Prostate gland (tissue), 2 donors: ENCODE measurements at regions of chr10 and their contacts with region 1.

Region 1: DNA sequence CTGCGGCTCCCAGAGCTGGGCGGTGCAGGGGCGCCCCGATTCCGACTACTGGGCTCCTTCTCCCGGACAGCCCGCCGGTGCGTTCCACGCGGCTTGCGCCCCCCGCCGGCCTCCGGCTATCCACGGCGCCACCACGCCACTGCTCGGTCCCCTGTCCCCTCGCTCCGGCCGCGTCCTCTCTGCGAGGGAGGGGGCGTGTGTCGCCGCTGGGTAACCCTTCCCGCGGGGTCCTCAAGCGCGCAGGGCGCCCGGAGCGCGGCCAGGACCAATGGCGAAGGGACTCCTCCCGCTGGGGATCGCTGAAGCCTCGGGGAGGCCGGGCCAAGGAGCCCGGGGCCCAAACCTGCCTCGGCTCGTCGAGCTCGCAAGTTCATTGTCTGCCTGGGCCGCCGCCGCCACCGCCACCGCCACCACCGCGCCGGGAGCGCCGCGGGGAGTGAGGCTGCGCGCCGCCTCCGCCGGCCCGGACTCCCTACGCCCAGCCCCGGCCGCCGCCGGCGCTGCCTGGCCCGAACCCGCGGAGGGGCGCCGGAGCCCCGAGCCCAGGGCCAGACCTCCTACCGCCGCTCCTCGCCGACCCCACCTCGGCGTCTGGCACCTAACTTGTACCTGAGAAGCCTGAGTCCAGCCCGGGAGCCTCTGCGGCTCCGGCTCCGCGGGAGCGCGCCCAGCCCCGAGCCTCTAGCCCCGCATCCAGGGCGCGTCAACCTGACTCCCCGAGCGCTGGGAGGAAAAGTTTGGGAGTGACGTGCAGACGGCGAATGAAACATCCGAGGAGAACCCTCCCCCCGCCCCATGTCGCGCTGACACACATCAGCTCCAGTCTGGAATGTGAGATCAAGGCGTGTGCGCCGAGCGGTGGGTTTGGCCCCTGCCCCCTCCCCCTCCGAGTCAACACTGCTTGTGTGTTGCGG is at the start of gene CHST15:
- DNase-seq: peak; percentile 50
- H3K4me3 ChIP-seq: peak within 1 kb of the TSS; percentile 54 to 57
- H3K27ac ChIP-seq: peak within 1 kb of the TSS; percentile 83 to 89
- H3K4me1 ChIP-seq: peaks cover 7% of the 10 kb centered on the region
- H3K27me3 ChIP-seq: peaks cover 3% of the 10 kb centered on the region
- CTCF ChIP-seq: peak in 2 of 4 experiments; percentile 30 to 36
- POLR2A ChIP-seq: peak; percentile 82
- total RNA-seq, gene CHST15: 13.9 to 26.0 TPM

Region 2: GRCh38 chr10:123994417-123995081 is 98.6 kb before region 1 on chr10:
- intact Hi-C with region 1: loop called (anchors 5 kb)
- DNase-seq: peak; percentile 80
- H3K4me3 ChIP-seq: no peak overlapping the region
- H3K27ac ChIP-seq: no peak overlapping the region
- H3K4me1 ChIP-seq: no peaks in the 10 kb centered on the region
- H3K27me3 ChIP-seq: peaks cover 7% of the 10 kb centered on the region
- CTCF ChIP-seq: peak; percentile 97 to 99 (median 98)
- POLR2A ChIP-seq: no peak

Region 3: GRCh38 chr10:124217906-124218804 is 125.0 kb after region 1 on chr10:
- intact Hi-C with region 1: no loop called
- DNase-seq: peak; percentile 13
- H3K4me3 ChIP-seq: no peak overlapping the region
- H3K27ac ChIP-seq: no peak overlapping the region
- H3K4me1 ChIP-seq: no peaks in the 10 kb centered on the region
- H3K27me3 ChIP-seq: no peaks in the 10 kb centered on the region
- CTCF ChIP-seq: peak in 1 of 4 experiments; percentile 22
- POLR2A ChIP-seq: no peak

Region 4: DNA sequence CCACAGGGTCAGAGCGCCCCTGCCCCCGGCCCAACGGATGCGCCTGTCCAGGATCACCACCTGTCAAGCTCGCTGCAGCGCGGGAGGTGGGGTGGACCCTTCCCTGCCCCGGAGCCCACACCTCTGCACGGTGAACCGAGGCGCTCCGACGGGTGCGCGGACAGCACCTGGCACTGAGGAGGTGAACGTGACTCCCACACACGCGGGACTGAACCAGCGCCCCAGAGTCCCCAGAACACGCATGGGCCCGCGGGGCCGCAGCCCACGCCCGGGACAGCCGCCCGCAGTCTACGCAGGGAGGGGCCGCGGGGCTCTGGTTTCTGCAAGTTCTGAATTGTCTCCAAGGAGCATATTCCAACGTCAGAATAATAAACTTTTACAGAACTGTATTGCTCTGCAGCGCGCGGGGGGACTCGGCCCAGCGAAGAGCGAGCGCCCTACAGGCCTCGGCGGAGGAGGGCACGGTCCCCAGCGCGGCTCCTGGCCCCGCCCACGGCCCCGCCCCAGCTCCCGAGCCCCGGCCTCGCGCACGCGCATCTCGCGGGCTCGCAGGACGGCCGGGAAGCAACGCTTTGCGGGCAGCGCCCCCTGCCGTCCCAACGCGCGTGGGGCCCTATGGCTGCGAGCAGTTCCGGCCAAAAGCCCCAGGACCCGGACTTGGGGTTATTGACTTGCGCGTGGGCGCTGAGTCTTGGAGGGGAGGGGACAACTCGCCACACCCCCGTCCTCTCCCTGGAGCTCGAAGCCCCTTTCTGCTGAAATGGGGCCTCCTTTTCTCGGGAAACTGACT is 295.9 kb after region 1 on chr10:
- intact Hi-C with region 1: loop called (anchors 10 kb)
- DNase-seq: peak; percentile 84
- H3K4me3 ChIP-seq: peak overlapping the region; percentile 36 to 37
- H3K27ac ChIP-seq: no peak overlapping the region
- H3K4me1 ChIP-seq: no peaks in the 10 kb centered on the region
- H3K27me3 ChIP-seq: no peaks in the 10 kb centered on the region
- CTCF ChIP-seq: peak; percentile 96 to 99 (median 98)
- POLR2A ChIP-seq: peak; percentile 7